Activated CD4-positive, alpha-beta T cell treated with anti-CD3 and anti-CD28 coated beads for 36 hours (primary cell): ENCODE measurements at regions of chr10 and their contacts with region 1.

Region 1: DNA sequence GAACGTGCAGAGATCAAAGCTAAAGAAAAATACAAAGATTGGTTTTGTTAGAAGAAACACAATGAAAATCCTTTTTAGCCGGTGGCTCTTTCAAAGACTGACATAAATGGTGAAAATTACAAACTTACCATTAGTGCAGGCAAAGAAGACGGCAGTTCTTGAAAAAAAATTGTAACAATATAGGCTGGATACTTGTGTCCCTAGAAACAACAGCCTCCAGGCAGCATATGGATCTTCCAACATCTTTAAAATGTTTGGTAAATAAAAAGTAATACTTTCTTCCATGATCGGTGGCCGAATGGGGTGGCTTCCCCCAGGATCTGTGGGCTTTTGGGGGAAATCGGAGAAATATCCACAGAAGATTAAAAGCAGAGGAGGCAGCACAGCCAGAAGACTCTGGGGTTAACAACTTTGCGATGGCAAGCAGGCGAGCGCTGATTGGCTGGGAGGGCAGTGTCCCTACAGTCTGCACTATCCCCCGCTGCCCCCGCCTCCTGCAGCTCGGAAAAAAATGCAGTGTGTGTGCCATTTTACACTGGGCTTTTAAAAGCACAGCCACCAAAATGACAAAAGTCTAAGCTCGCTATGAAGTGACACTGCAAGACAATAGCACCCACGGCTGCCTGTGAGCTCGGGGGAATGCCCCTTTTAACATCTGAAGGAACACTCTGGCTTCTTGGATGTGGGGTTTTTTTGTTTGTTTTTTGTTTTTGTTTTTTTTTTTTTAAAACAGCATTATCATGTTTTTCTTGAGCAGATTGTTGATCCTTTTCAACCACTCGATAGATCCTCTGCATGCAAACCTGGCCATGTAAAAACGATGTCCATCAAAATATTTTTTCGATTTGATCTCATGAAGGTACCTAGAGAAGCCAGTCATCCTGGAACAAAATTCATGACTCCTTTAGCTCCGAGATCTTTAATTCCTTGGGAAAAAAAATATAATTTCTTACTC is 31.7 kb upstream of the EPC1 start:
- DNase-seq: peak; percentile 97
- ATAC-seq: peak; percentile 95
- H3K4me3 Mint-ChIP-seq: no peak overlapping the region
- H3K27ac Mint-ChIP-seq: no peak overlapping the region
- H3K4me1 Mint-ChIP-seq: peaks cover 18% of the 10 kb centered on the region
- H3K27me3 Mint-ChIP-seq: no peaks in the 10 kb centered on the region

Region 2: DNA sequence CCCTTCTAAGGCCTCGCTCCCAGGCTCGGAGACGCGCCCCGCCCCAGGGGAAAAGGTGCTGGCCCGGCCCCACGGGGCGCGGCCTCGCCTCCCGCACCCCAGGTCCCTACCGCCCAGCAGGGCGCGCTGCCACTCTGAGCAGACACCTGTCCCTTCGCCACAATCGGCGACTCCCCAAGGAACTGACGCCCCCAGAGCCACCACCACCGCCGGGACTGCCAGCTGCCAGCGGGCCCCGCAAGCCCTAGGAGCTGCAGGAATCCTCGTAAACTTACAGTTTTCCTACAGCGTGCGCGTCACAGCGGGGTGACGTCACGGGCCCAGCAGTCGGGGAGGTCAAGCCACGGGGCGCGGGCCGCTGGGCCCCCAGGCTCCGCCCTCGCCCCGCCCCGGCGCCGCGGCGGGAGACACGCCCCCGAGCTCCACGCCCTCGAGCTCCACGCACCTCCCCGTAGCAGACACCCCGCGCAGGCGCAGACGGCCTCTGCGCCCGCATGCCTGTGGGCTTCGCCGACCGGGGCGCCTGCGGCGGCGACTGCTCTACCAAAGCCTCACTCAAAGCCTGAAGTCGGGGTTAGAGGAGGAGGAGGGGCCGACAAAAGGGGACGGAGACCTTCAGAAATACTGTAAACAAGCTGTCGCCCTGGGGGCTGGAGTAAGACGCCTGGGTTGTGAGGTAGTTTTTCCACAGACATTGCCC is 1346.9 kb before region 1 on chr10 and contains the start of gene ZNF438:
- CTCF ChIA-PET with region 1: no interaction called
- POLR2A ChIA-PET with region 1: interaction called, 4 read pairs
- intact Hi-C with region 1: loop called in 1 of 2 experiments (anchors 5 kb)
- DNase-seq: peak; percentile 96
- ATAC-seq: peak; percentile 81
- H3K4me3 Mint-ChIP-seq: peak within 1 kb of the TSS; percentile 81
- H3K27ac Mint-ChIP-seq: peak within 1 kb of the TSS; percentile 99
- H3K4me1 Mint-ChIP-seq: peaks cover 19% of the 10 kb centered on the region
- H3K27me3 Mint-ChIP-seq: no peaks in the 10 kb centered on the region
- total RNA-seq, gene ZNF438: 3.1 to 3.7 TPM

Region 3: GRCh38 chr10:31789557-31789956 is 589.1 kb before region 1 on chr10:
- CTCF ChIA-PET with region 1: no interaction called
- POLR2A ChIA-PET with region 1: no interaction called
- intact Hi-C with region 1: no loop called
- DNase-seq: no peak
- ATAC-seq: no peak
- H3K4me3 Mint-ChIP-seq: no peak overlapping the region
- H3K27ac Mint-ChIP-seq: no peak overlapping the region
- H3K4me1 Mint-ChIP-seq: peaks cover 3% of the 10 kb centered on the region
- H3K27me3 Mint-ChIP-seq: peaks cover 8% of the 10 kb centered on the region

Region 4: DNA sequence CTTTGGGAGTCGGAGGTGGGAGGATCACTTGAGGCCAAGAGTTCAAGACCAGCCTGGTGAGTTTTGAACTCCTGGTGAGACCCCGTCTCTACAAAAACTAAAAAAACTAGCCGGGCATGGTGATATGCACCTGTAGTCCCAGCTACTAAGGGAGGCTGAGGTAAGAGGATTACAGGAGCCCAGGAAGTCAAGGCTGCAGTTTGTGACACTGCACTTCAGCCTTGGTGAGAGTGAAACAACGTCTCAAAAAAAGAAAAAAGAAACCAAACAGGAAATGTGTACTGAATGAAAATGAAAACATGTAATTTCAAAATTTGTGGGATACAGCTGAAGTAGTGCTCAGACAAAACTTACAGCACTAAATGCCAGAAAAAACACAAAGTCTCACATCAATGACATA is 457.6 kb before region 1 on chr10:
- CTCF ChIA-PET with region 1: no interaction called
- POLR2A ChIA-PET with region 1: no interaction called
- intact Hi-C with region 1: loop called in 1 of 2 experiments (anchors 5 kb)
- DNase-seq: peak; percentile 32
- ATAC-seq: peak; percentile 75
- H3K4me3 Mint-ChIP-seq: peak overlapping the region; percentile 59
- H3K27ac Mint-ChIP-seq: peak overlapping the region; percentile 88
- H3K4me1 Mint-ChIP-seq: peaks cover 73% of the 10 kb centered on the region
- H3K27me3 Mint-ChIP-seq: no peaks in the 10 kb centered on the region

Region 5: DNA sequence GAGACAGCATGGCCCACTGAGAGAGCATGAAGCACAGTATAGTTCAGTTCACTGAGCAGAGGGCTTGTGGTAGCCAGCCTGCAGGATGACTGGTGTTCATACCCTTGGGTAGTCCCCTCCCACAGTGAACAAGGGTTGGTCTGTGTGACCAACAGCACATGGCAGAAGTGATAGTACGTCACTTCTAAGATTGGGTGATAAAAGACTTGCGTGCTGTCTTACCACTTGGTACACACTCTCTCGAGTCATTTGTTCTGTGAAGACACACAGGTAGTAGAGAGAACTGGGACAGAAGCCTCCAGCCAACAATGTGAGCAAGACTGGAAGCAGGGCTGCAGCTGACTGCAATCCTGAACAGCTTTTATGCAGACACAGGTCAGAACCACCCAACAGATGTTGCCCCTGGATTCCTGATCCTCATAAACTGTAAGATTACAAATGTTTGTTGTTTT is 46.3 kb before region 1 on chr10:
- CTCF ChIA-PET with region 1: interaction called, 3 read pairs
- POLR2A ChIA-PET with region 1: interaction called, 3 read pairs
- intact Hi-C with region 1: loop called in 1 of 2 experiments (anchors 5 kb)
- DNase-seq: peak; percentile 87
- ATAC-seq: peak; percentile 95
- H3K4me3 Mint-ChIP-seq: peak overlapping the region; percentile 75
- H3K27ac Mint-ChIP-seq: peak overlapping the region; percentile 98
- H3K4me1 Mint-ChIP-seq: peaks cover 96% of the 10 kb centered on the region
- H3K27me3 Mint-ChIP-seq: no peaks in the 10 kb centered on the region

Region 6: GRCh38 chr10:32413513-32413912 is 34.9 kb after region 1 on chr10:
- CTCF ChIA-PET with region 1: no interaction called
- POLR2A ChIA-PET with region 1: no interaction called
- intact Hi-C with region 1: loop called (anchors 1 kb)
- DNase-seq: peak; percentile 73
- ATAC-seq: peak; percentile 98
- H3K4me3 Mint-ChIP-seq: no peak overlapping the region
- H3K27ac Mint-ChIP-seq: no peak overlapping the region
- H3K4me1 Mint-ChIP-seq: peaks cover 9% of the 10 kb centered on the region
- H3K27me3 Mint-ChIP-seq: no peaks in the 10 kb centered on the region

Region 7: DNA sequence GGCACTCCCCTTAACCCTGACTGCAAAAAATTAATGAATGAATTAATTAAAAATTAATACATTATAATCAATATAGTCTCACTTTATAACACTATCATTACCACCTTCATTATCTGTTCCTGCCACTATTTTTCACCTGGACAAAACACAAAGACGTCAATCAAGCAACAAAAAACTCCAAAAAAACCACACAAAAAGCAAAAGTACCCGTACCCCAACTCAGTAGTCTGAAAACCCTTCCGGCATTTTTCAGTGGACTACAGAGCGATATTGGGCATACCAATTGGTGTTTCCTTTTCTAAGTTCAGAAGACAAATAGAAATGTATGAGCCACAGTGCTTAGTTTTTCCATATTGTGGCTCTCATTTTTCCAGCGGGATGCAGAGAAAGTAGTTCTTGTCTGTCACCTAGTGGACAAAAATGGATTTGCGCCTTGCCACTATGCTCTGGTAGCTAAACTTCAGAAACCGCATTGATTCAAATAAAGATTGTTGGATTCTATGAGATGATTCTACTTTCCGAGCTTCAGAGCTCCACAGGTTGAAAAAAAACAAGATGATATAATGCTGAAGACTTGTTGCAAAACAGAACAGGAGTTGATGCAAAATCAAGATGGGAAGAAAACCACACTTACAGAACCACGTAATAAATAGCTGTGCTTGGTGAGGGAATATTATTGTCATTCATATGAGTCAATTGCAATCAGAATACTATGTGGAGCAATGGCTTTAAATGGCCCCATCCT is 630.0 kb after region 1 on chr10:
- CTCF ChIA-PET with region 1: interaction called, 3 read pairs
- POLR2A ChIA-PET with region 1: no interaction called
- intact Hi-C with region 1: loop called (anchors 2 to 5 kb)
- DNase-seq: peak; percentile 80
- ATAC-seq: peak; percentile 61
- H3K4me3 Mint-ChIP-seq: peak overlapping the region; percentile 40
- H3K27ac Mint-ChIP-seq: peak overlapping the region; percentile 67
- H3K4me1 Mint-ChIP-seq: peaks cover 41% of the 10 kb centered on the region
- H3K27me3 Mint-ChIP-seq: peaks cover 7% of the 10 kb centered on the region